Activated naive CD8-positive, alpha-beta T cell treated with anti-CD3 and anti-CD28 coated beads, Interleukin-2, amount 10 ng/mL, durations not matched to agents 7 days and 5 days (primary cell): ENCODE measurements at regions of chr10 and their contacts with region 1.

Region 1: GRCh38 chr10:89414146-89414878 is at the start of gene IFIT5:
- DNase-seq: peak; percentile 82
- ATAC-seq: peak; percentile 75
- H3K4me3 Mint-ChIP-seq: peak within 1 kb of the TSS; percentile 100
- H3K27ac Mint-ChIP-seq: peak within 1 kb of the TSS; percentile 98
- H3K4me1 Mint-ChIP-seq: peaks cover 40% of the 10 kb centered on the region
- H3K27me3 Mint-ChIP-seq: no peaks in the 10 kb centered on the region
- total RNA-seq, gene IFIT5: 30.7 to 32.2 TPM

Region 2: GRCh38 chr10:89301721-89302445 is 112.4 kb before region 1 on chr10 and contains the start of gene IFIT2:
- POLR2A ChIA-PET with region 1: interaction called, 23 read pairs
- DNase-seq: peak; percentile 40
- ATAC-seq: peak; percentile 75
- H3K4me3 Mint-ChIP-seq: peak within 1 kb of the TSS; percentile 95
- H3K27ac Mint-ChIP-seq: peak within 1 kb of the TSS; percentile 94
- H3K4me1 Mint-ChIP-seq: peaks cover 33% of the 10 kb centered on the region
- H3K27me3 Mint-ChIP-seq: no peaks in the 10 kb centered on the region
- total RNA-seq, gene IFIT2: 18.5 to 21.6 TPM

Region 3: GRCh38 chr10:89327784-89328441 is 86.4 kb before region 1 on chr10 and contains the start of gene IFIT3:
- POLR2A ChIA-PET with region 1: interaction called, 33 read pairs
- DNase-seq: no peak
- ATAC-seq: peak; percentile 70
- H3K4me3 Mint-ChIP-seq: peak within 1 kb of the TSS; percentile 92
- H3K27ac Mint-ChIP-seq: peak within 1 kb of the TSS; percentile 94
- H3K4me1 Mint-ChIP-seq: peaks cover 30% of the 10 kb centered on the region
- H3K27me3 Mint-ChIP-seq: no peaks in the 10 kb centered on the region
- total RNA-seq, gene IFIT3: 72.5 to 75.6 TPM

Region 4: GRCh38 chr10:89391917-89392756 is 22.2 kb before region 1 on chr10 and contains the start of gene IFIT1:
- POLR2A ChIA-PET with region 1: interaction called, 170 read pairs
- DNase-seq: no peak
- ATAC-seq: peak; percentile 88
- H3K4me3 Mint-ChIP-seq: peak within 1 kb of the TSS; percentile 86
- H3K27ac Mint-ChIP-seq: peak within 1 kb of the TSS; percentile 88
- H3K4me1 Mint-ChIP-seq: peaks cover 35% of the 10 kb centered on the region
- H3K27me3 Mint-ChIP-seq: no peaks in the 10 kb centered on the region
- total RNA-seq, gene IFIT1: 45.7 to 48.4 TPM

Region 5: DNA sequence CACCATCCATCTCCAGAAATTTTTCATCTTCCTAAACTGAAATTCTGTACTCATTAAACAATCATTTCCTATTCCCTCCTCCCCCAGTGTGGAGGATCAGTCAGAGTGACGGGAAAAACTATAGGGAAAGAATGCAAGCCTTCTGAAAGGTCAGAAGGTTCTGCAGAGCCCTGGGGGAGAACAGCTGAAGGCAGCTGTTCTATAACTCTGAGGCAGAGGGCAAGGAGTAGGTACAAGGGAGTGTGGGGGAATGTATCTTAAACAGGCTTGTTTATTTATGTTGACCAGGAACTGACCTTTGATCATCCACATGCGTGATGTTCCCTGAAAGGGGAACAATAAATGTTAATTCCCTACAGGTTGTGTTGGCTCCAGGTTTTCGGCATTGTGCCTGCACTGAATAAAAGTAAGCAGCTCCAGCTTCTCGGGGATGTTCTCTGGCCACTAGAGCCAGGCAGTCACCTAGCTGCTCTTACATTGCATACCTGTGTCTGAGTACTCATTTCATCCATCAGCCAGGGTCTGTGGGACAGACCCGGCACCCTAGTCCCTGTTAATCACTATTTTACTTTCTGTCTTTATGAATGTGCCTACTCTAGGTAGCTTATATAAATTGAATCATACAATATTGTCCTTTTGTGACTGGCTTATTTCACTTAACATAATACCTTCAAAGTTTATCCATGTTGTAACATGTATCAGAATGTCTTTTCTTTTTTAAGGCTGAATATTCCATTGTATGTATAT is 16.1 kb before region 1 on chr10:
- POLR2A ChIA-PET with region 1: interaction called, 170 read pairs
- DNase-seq: no peak
- ATAC-seq: no peak
- H3K4me3 Mint-ChIP-seq: no peak overlapping the region
- H3K27ac Mint-ChIP-seq: no peak overlapping the region
- H3K4me1 Mint-ChIP-seq: peaks cover 50% of the 10 kb centered on the region
- H3K27me3 Mint-ChIP-seq: no peaks in the 10 kb centered on the region

Region 6: DNA sequence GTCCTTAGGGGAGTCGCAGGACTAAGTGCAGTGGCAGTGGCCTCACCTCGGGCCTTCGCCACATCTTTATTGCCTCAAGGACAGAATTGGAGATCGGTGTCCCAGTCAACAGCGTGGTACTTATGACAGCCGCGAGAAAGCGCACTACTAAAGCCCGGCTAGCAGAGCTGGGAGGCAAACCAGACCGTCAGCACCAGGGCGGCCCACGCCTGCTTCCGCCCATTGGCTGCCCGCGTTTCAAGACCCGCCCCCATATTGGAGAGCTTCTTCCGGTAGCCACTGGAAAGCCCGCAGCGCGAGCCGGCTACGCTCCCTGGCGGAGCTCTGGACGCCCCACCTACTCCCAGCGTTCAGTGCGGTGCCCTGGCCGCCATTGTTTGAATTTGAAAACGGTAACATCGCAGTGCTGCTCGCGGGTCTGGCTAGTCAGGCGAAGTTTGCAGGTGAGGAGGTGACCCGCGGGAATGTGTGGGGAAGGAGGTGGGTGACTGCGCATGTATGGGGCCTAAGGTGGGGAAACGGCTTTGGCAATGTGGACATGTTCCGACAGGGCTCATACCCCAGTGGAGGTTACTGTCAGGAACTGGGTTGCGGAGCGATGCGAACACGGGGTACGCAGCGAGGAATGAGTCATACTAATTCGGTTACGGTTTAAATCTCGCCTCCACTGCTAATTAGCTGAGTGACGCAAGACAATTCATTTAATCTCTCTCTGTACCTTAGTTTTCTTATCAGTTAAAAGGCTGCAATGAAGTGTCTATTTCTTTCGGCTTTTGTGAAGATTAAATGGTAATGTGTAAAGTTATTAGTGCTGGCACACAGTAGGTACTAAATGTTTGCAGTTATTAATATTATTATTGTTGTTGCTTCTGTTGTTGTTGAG is 287.2 kb after region 1 on chr10 and contains the start of gene KIF20B:
- POLR2A ChIA-PET with region 1: interaction called, 13 read pairs
- DNase-seq: peak; percentile 91
- ATAC-seq: peak; percentile 98
- H3K4me3 Mint-ChIP-seq: peak within 1 kb of the TSS; percentile 97
- H3K27ac Mint-ChIP-seq: peak within 1 kb of the TSS; percentile 99
- H3K4me1 Mint-ChIP-seq: peaks cover 34% of the 10 kb centered on the region
- H3K27me3 Mint-ChIP-seq: no peaks in the 10 kb centered on the region
- total RNA-seq, gene KIF20B: 56.4 to 58.1 TPM